ENCODE measurements at regions of chr20 and their contacts with region 1.

Region 1: GRCh38 chr20:36848078-36848660 is 27.8 kb upstream of the TLDC2 start:
- DNase-seq: no peak
- H3K4me3 ChIP-seq: no peak overlapping the region
- H3K27ac ChIP-seq: no peak overlapping the region
- H3K4me1 ChIP-seq: peaks cover 21% of the 10 kb centered on the region
- H3K27me3 ChIP-seq: no peaks in the 10 kb centered on the region
- CTCF ChIP-seq: no peak

Region 2: GRCh38 chr20:36611625-36612024 is 236.5 kb before region 1 on chr20:
- CTCF ChIA-PET with region 1: interaction called, 10 read pairs
- dilution Hi-C with region 1: no loop called
- in situ Hi-C with region 1: no loop called
- intact Hi-C with region 1: no loop called
- DNase-seq: no peak
- H3K4me3 ChIP-seq: no peak overlapping the region
- H3K27ac ChIP-seq: no peak overlapping the region
- H3K4me1 ChIP-seq: peaks cover 10% of the 10 kb centered on the region
- H3K27me3 ChIP-seq: no peaks in the 10 kb centered on the region
- CTCF ChIP-seq: no peak

Region 3: GRCh38 chr20:36808317-36809257 is 39.6 kb before region 1 on chr20:
- CTCF ChIA-PET with region 1: no interaction called
- dilution Hi-C with region 1: no loop called
- in situ Hi-C with region 1: no loop called
- intact Hi-C with region 1: no loop called
- DNase-seq: peak; percentile 64
- H3K4me3 ChIP-seq: no peak overlapping the region
- H3K27ac ChIP-seq: peak overlapping the region; percentile 40
- H3K4me1 ChIP-seq: no peaks in the 10 kb centered on the region
- H3K27me3 ChIP-seq: no peaks in the 10 kb centered on the region
- CTCF ChIP-seq: peak; percentile 65 to 84

Region 4: DNA sequence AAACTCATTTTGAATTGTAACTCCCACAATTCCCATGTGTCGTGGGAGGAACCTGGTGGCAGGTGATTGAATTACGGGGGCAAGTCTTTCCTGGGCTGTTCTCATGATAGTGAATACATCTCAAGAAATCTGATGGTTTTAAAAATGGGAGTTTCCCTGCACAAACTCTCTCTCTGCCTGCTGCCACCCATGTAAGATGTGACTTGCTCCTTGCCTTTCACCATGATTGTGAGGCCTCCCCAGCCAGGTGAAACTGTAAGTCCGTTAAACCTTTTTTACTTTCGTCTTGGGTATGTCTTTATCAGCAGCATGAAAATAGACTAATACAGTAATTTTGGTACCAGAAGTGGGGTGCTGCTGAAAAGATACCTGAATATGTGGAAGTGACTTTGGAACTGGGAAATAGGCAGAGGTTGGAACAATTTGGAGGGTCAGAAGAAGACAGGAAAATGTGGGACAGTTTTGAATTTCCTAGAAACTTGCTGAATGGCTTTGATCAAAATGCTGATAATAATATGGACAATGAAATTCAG is 144.7 kb after region 1 on chr20:
- CTCF ChIA-PET with region 1: no interaction called
- dilution Hi-C with region 1: no loop called
- in situ Hi-C with region 1: no loop called
- intact Hi-C with region 1: no loop called
- DNase-seq: no peak
- H3K4me3 ChIP-seq: no peak overlapping the region
- H3K27ac ChIP-seq: no peak overlapping the region
- H3K4me1 ChIP-seq: no peaks in the 10 kb centered on the region
- H3K27me3 ChIP-seq: no peaks in the 10 kb centered on the region
- CTCF ChIP-seq: no peak